ENCODE measurements at regions of chr1 and their contacts with region 1.

Region 1: GRCh38 chr1:201488817-201489589 is 17.9 kb downstream of the CSRP1 start:
- DNase-seq: peak; percentile 92
- H3K4me3 ChIP-seq: no peak overlapping the region
- H3K27ac ChIP-seq: peak overlapping the region; percentile 65
- H3K4me1 ChIP-seq: peaks cover 48% of the 10 kb centered on the region
- H3K27me3 ChIP-seq: no peaks in the 10 kb centered on the region
- CTCF ChIP-seq: no peak

Region 2: DNA sequence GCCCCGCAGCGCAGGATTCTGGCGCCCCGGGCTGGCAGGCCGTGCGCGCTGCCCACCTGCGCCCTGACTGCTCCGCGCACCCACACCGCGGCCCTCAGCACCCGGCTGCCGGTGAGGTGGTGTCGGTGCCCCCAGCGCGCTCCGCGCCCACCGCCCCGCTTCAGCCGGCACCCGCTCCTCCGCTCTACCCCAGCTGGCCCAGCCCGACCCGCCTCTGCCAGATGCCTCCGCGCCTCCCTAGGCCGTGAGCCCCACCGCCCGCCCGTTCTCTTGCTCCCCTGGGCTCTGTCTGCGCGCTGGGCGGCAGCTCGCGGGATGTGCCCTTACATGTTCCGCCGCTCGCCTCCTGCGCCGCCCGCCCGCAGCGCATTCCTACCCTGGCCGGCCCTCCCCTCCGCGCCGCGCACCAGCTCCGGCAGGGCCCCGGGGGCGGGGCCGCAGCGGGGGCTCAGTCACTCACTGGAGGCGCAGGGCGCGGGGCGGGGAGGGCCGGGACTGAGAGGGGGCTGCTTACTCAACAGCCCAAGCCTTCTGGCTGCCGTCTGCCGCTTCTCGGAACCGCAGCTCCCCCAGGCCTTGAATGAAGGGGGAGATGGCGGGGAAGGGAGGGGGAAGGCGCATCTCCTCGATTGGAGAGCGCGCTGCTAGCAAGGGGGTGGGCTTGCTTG is 20.0 kb before region 1 on chr1 and contains the start of gene PHLDA3:
- CTCF ChIA-PET with region 1: no interaction called
- dilution Hi-C with region 1: no loop called
- in situ Hi-C with region 1: no loop called
- intact Hi-C with region 1: no loop called
- DNase-seq: peak; percentile 93
- H3K4me3 ChIP-seq: peak within 1 kb of the TSS; percentile 85 to 100 (median 97)
- H3K27ac ChIP-seq: peak within 1 kb of the TSS; percentile 91
- H3K4me1 ChIP-seq: peaks cover 41% of the 10 kb centered on the region
- H3K27me3 ChIP-seq: no peaks in the 10 kb centered on the region
- CTCF ChIP-seq: no peak
- total RNA-seq, gene PHLDA3: 132 to 205 TPM

Region 3: DNA sequence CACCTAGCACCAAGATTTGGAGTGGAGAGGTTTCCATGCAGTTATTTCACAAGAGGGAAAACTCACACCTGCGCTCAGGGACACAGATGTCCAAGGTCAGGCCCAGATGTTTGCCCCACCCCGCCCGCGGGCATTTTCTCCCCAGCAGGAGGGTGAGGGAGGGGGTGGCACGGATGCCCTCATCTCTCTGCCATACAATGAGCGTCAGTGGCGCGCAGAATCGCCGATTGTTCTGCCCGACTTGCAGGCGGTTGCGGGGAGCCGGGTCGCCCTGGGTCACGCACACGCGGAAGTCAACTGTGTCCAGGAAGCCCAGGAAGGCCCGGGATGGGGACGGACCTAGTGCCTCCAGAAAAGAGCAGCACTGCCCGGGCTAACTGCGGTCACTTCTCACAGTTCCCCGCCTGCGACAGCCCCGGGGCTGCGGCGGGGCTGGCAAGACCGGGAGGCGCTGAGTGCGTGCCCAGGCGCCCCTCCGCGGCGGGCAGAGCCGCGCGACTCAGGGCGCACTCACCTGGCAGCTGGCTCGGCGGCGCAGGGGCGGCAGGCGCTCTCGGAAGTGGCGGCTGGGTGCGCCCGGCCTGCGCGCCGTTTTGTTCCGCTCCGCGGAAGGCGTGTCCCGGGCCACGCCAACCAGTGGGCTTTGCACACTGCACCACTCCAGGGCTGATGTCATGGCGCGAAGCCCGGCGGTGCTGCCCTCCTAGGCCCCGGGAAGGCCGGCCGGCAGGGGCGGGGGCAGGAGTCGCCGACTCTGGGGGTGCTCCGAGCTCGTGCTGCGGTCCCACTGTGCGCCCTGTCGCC is 17.8 kb after region 1 on chr1 and contains the start of gene CSRP1:
- CTCF ChIA-PET with region 1: no interaction called
- dilution Hi-C with region 1: no loop called
- in situ Hi-C with region 1: no loop called
- intact Hi-C with region 1: loop called (anchors 1 kb)
- DNase-seq: peak; percentile 84
- H3K4me3 ChIP-seq: peak within 1 kb of the TSS; percentile 63 to 70 (median 67)
- H3K27ac ChIP-seq: peak within 1 kb of the TSS; percentile 72
- H3K4me1 ChIP-seq: peaks cover 54% of the 10 kb centered on the region
- H3K27me3 ChIP-seq: no peaks in the 10 kb centered on the region
- CTCF ChIP-seq: peak in 1 of 2 donors; percentile 20
- total RNA-seq, gene CSRP1: 145 to 609 TPM